Endothelial cell of umbilical vein (primary cell): ENCODE measurements at regions of chr1 and their contacts with region 1.

Region 1: DNA sequence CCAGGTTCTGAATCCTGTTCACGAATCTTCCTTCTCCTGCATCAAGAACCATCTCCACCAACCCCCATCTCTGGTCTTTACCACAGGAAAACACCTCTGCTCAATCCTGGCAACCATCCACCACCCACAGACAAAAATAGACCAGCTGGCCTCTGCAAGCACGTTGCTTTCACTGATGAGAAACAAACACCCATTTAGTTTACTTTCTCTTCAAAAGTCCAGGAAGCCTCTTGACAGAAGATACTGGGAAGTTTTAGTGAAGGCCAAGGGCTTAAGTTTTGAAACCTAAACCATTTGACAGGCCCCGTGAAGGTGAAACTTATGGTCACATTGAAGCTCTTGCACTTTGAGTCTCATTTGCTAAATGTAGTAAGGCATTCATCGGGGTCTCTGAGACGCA is 122.6 kb upstream of the PPP2R5A start:
- DNase-seq: peak; percentile 57
- H3K4me3 ChIP-seq: no peak overlapping the region
- H3K27ac ChIP-seq: no peak overlapping the region
- H3K4me1 ChIP-seq: peaks cover 29% of the 10 kb centered on the region
- H3K27me3 ChIP-seq: no peaks in the 10 kb centered on the region
- CTCF ChIP-seq: no peak
- POLR2A ChIP-seq: no peak

Region 2: GRCh38 chr1:212104586-212105325 is 57.9 kb before region 1 on chr1:
- CTCF ChIA-PET with region 1: interaction called, 5 read pairs
- POLR2A ChIA-PET with region 1: interaction called, 3 read pairs
- dilution Hi-C with region 1: no loop called
- intact Hi-C with region 1: loop called (anchors 1 kb)
- DNase-seq: no peak
- H3K4me3 ChIP-seq: no peak overlapping the region
- H3K27ac ChIP-seq: no peak overlapping the region
- H3K4me1 ChIP-seq: peaks cover 3% of the 10 kb centered on the region
- H3K27me3 ChIP-seq: no peaks in the 10 kb centered on the region
- CTCF ChIP-seq: no peak
- POLR2A ChIP-seq: no peak

Region 3: DNA sequence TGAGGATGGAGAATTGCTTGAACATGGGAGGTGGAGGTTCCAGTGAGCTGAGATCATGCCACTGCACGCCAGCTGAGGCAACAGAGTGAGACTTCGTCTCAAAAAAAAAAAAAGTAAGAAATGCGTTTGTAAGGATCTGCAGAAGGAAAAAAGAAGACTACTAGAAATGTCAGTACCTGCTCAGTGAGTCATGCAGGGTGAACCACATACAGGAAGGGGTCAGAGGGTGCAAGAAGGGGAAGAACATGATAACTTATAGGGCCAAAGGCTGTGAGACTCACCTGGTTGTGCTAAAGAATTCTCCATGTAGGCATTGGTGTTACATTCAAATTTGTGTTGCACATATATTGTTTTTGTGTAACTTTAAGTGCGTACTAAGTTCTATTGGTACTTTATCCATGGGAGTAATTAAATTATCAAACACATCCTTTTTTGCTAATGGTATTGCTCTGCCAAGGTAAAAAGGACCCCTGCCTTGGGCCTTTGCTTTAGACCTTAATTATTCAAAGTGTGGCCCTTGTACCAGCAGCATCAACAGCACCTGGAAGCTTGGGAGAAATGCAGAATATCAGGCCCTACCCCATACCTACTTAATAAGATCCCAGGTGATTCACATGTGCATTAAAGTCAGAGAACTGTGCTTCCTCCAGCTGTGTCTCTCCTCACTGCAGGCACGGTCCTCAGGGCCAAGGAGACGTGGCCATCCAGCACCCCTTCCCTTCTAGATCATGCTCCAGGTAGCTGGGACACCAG is 26.1 kb after region 1 on chr1:
- CTCF ChIA-PET with region 1: no interaction called
- POLR2A ChIA-PET with region 1: no interaction called
- dilution Hi-C with region 1: no loop called
- intact Hi-C with region 1: loop called (anchors 2 kb)
- DNase-seq: no peak
- H3K4me3 ChIP-seq: no peak overlapping the region
- H3K27ac ChIP-seq: no peak overlapping the region
- H3K4me1 ChIP-seq: peaks cover 6% of the 10 kb centered on the region
- H3K27me3 ChIP-seq: no peaks in the 10 kb centered on the region
- CTCF ChIP-seq: no peak
- POLR2A ChIP-seq: no peak

Region 4: GRCh38 chr1:212284744-212285684 is 122.4 kb after region 1 on chr1 and contains the start of gene PPP2R5A:
- CTCF ChIA-PET with region 1: interaction called, 3 read pairs
- POLR2A ChIA-PET with region 1: interaction called, 3 read pairs
- dilution Hi-C with region 1: no loop called
- intact Hi-C with region 1: loop called (anchors 1 kb)
- DNase-seq: peak; percentile 100
- H3K4me3 ChIP-seq: peak within 1 kb of the TSS; percentile 63 to 86 (median 85)
- H3K27ac ChIP-seq: peak within 1 kb of the TSS; percentile 44
- H3K4me1 ChIP-seq: peaks cover 19% of the 10 kb centered on the region
- H3K27me3 ChIP-seq: no peaks in the 10 kb centered on the region
- CTCF ChIP-seq: peak in 1 of 2 donors; percentile 15
- POLR2A ChIP-seq: peak; percentile 53
- total RNA-seq, gene PPP2R5A: 27.7 and 34.5 TPM in 2 replicates